Activated CD4-positive, alpha-beta memory T cell treated with anti-CD3 and anti-CD28 coated beads, Interleukin-2, amount 10 ng/mL, durations not matched to agents 7 days and 5 days (primary cell): ENCODE measurements at regions of chr3 and their contacts with region 1.

Region 1: DNA sequence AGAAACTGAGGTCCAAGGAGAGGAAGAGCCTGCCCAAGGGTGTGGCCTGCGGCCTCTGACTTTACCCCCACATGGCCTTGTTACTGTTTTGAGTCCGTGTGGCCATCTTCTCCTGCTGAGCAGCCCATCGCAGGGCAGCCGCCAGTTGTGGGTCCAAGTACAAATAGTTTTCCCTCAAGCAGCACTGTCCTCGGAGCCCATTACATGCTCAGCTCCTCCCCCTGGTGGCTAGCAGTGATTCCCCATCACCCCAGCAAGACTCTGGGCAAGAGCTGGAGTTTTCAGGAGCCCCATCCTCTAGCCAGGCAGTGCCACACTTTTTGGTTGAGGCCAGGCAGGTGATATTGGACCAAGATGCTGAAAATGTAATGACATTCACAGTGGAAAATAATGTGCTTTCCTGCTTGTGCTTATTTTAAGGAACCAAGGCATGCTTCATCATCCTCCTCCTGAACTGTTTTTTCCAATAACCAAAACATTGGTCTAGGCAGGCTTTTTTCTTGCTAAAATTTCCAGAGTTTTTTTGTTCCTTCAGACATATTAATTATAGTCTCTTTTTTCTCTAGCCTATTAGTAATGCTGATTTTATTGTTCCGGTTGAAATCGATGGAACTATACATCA is 23.2 kb upstream of the VILL start:
- DNase-seq: peak; percentile 66
- H3K4me3 Mint-ChIP-seq: no peak overlapping the region
- H3K27ac Mint-ChIP-seq: no peak overlapping the region
- H3K4me1 Mint-ChIP-seq: no peaks in the 10 kb centered on the region
- H3K27me3 Mint-ChIP-seq: peaks cover 9% of the 10 kb centered on the region

Region 2: DNA sequence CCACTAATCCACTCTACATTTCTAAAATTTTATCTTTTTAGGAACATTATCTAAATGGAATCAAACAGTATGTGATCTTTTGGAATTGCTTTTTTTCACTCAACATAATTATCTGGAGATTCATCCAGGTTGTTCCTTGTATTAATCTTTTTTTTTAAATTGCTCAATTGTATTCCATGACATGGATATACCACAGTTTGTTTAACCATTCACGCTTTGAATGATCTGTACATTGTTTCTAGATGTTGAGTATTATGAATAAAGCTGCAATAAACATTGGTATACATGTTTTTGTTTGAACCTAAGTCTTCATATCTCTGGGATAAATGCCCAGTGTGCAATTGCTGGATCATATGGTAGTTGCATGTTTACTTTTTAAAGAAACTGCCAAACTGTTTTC is 100.2 kb before region 1 on chr3:
- CTCF ChIA-PET with region 1: interaction called, 10 read pairs
- POLR2A ChIA-PET with region 1: interaction called, 3 read pairs
- DNase-seq: no peak
- H3K4me3 Mint-ChIP-seq: no peak overlapping the region
- H3K27ac Mint-ChIP-seq: no peak overlapping the region
- H3K4me1 Mint-ChIP-seq: peaks cover 9% of the 10 kb centered on the region
- H3K27me3 Mint-ChIP-seq: peaks cover 72% of the 10 kb centered on the region

Region 3: DNA sequence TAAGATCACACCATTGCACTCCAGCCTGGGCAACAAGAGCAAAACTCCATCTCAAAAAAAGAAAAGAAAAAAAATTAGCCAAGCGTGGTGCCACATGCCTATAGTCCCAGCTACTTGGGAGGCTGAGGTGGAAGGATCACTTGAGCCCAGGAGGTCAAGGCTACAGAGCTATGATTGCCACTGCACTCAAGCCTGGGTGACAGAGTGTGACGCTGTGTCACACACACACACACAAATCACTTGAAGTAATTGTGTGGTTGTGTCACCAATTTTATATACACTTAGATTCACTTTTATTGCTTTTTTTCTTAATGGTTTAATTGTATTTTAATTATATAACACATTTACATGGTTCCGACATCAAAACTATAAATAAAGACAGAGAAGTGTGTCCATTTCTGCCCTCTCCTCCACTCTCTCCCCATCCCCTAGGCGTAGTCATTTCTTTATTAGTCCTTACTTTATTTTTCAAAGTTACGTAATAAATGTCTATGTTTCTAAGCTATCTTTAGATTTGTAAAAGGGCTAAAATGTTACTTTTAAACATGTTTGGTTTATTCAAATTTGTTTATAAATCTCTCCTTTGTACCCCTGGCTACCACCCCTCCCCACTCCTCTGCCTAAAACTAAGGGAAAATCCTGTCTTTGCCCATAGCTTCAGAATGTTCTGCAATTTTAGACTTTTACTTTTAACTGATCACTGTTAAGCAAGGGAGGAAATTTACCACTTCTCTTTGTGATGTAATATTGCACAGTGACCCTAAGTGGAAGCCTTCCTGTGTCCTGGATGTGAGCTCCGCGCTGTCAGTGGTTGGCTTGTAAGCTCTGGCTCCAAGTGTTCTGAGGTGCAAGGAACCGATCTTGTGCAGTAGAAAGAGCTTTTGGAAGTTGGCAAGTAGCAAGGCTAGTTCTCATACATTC is 12.4 kb after region 1 on chr3:
- CTCF ChIA-PET with region 1: interaction called, 22 read pairs
- POLR2A ChIA-PET with region 1: no interaction called
- DNase-seq: no peak
- H3K4me3 Mint-ChIP-seq: no peak overlapping the region
- H3K27ac Mint-ChIP-seq: no peak overlapping the region
- H3K4me1 Mint-ChIP-seq: peaks cover 3% of the 10 kb centered on the region
- H3K27me3 Mint-ChIP-seq: peaks cover 3% of the 10 kb centered on the region

Region 4: DNA sequence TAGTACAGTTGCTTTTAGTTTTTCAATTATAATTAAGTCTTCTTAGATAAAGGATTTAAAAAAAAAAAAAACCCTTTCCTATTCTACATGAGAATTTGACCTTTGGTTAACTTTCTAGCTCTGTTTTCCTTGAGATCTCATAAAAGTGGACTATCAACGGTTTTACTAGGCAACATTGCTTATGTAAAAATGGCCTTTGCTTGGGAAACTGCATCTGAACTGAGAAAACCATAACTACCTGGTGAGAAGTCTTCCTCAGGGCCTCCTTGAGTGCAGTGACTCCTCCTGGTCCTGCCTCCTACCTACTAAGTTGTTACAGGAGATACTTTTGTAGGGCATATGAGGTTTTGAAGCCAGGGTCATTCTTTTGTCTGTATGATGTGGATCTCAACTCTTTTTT is 444.2 kb after region 1 on chr3:
- CTCF ChIA-PET with region 1: no interaction called
- POLR2A ChIA-PET with region 1: no interaction called
- DNase-seq: no peak
- H3K4me3 Mint-ChIP-seq: no peak overlapping the region
- H3K27ac Mint-ChIP-seq: no peak overlapping the region
- H3K4me1 Mint-ChIP-seq: no peaks in the 10 kb centered on the region
- H3K27me3 Mint-ChIP-seq: no peaks in the 10 kb centered on the region